Ascending aorta (tissue), 2 donors: ENCODE measurements at regions of chr4 and their contacts with region 1.

Region 1: GRCh38 chr4:102868781-102869568 is at the start of gene CISD2:
- DNase-seq: peak; percentile 71 to 95
- H3K4me3 ChIP-seq: peak within 1 kb of the TSS; percentile 76 to 86
- H3K27ac ChIP-seq: peak within 1 kb of the TSS; percentile 96 to 98
- H3K4me1 ChIP-seq: peaks cover 6 to 16% of the 10 kb centered on the region in 2 donors
- H3K27me3 ChIP-seq: no peaks in the 10 kb centered on the region
- CTCF ChIP-seq: peak in 1 of 3 experiments; percentile 2
- total RNA-seq, gene CISD2: 10.4 TPM

Region 2: GRCh38 chr4:102500696-102501446 is 368.1 kb before region 1 on chr4 and contains the start of gene NFKB1:
- intact Hi-C with region 1: loop called (anchors 2 kb)
- DNase-seq: peak; percentile 19 to 82
- H3K4me3 ChIP-seq: peak within 1 kb of the TSS; percentile 88 to 98
- H3K27ac ChIP-seq: peak within 1 kb of the TSS; percentile 93 to 99
- H3K4me1 ChIP-seq: peaks cover 0 to 20% of the 10 kb centered on the region in 2 donors
- H3K27me3 ChIP-seq: no peaks in the 10 kb centered on the region
- CTCF ChIP-seq: no peak
- total RNA-seq, gene NFKB1: 34.5 TPM

Region 3: DNA sequence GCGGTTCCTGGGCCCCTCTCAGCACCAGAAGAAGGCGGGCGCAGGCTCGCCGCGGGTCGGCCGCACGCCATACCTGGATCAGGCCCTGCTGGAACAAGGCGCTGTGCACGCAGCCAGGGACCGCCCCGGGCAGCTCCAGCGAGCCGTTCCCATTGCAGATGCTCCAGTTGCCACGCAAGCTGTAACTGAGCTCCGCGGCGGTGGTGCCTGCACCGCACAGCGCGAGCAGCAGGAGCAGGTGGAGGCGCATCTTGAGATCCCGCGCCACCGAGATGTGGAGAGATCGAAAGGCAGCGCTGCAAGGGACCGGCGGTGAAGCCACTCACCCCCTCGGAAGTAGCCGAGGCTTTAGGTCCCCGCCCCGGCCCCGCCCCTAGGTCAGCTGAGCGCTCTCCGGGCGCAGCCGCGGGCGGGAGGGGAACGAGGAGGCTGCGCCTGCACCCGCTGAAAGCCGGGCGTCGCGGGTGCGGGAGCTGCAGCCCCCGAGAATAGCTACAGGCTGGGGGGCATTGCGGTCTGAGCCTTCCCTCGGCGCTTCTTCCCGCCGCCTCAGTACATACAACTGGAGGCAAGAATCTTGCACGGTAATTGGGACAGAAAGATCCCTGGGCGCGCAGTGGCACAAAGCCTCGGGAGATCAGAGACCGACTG is 108.2 kb before region 1 on chr4 and contains the start of gene MANBA:
- intact Hi-C with region 1: loop called (anchors 1 kb)
- DNase-seq: peak; percentile 30 to 88
- H3K4me3 ChIP-seq: peak within 1 kb of the TSS; percentile 87 to 91
- H3K27ac ChIP-seq: peak within 1 kb of the TSS; percentile 71 to 79
- H3K4me1 ChIP-seq: peaks cover 0 to 2% of the 10 kb centered on the region in 2 donors
- H3K27me3 ChIP-seq: no peaks in the 10 kb centered on the region
- CTCF ChIP-seq: no peak
- total RNA-seq, gene MANBA: 9.7 TPM